Psoas muscle (tissue), 8 donors: ENCODE measurements at regions of chr4 and their contacts with region 1.

Region 1: DNA sequence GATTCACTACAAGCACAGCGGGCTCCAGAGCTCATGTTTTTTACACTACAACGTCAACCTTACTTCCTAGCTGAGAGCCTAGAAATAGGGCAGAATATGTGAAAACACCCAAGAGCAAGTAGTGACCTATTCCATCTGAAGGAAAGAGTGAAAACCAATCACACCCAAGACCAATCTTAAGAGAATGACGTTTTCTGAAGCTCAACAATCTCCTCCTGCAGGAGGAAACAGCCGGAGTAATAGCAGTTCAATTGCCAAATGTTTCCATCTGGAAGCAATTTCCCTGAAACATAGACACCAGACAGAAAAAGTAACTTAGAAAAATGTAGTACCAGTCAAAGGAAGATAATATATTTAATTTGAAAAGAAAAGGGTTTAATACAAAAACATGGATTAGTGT is 142.4 kb downstream of the ANXA5 start:
- DNase-seq: no peak
- ATAC-seq: peak in 1 of 4 donors; percentile 27
- H3K4me3 ChIP-seq: no peak overlapping the region
- H3K27ac ChIP-seq: peak overlapping the region; percentile 39
- H3K4me1 ChIP-seq: no peaks in the 10 kb centered on the region
- H3K27me3 ChIP-seq: no peaks in the 10 kb centered on the region
- CTCF ChIP-seq: no peak

Region 2: GRCh38 chr4:121484633-121485032 is 69.7 kb before region 1 on chr4:
- intact Hi-C with region 1: no loop called
- DNase-seq: no peak
- ATAC-seq: peak in 1 of 4 donors; percentile 31
- H3K4me3 ChIP-seq: no peak overlapping the region
- H3K27ac ChIP-seq: no peak overlapping the region
- H3K4me1 ChIP-seq: no peaks in the 10 kb centered on the region
- H3K27me3 ChIP-seq: no peaks in the 10 kb centered on the region
- CTCF ChIP-seq: peak; percentile 43

Region 3: GRCh38 chr4:121597346-121597934 is 43.1 kb after region 1 on chr4:
- intact Hi-C with region 1: loop called in 1 of 2 experiments (anchors 5 kb)
- DNase-seq: no peak
- ATAC-seq: no peak
- H3K4me3 ChIP-seq: no peak overlapping the region
- H3K27ac ChIP-seq: no peak overlapping the region
- H3K4me1 ChIP-seq: no peaks in the 10 kb centered on the region
- H3K27me3 ChIP-seq: no peaks in the 10 kb centered on the region
- CTCF ChIP-seq: no peak

Region 4: DNA sequence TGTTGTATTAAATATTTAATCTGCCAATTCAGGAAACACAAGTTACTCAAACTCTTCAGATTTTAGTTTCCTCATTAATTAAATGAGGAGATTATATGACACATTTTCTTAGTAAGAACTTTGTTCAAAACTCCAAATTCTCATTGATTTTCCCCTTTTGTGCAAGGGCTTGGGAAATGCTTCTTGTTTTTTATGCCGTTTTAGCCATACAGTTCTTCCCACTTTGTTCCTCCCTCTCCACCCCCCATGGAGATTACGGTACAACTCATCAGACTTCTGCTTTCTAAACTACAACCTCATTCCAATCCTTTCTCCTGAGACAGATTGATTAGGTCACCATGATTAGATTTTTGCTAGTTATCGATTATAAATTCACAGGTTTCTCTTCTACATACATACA is 326.8 kb after region 1 on chr4:
- intact Hi-C with region 1: no loop called
- DNase-seq: no peak
- ATAC-seq: no peak
- H3K4me3 ChIP-seq: no peak overlapping the region
- H3K27ac ChIP-seq: no peak overlapping the region
- H3K4me1 ChIP-seq: no peaks in the 10 kb centered on the region
- H3K27me3 ChIP-seq: peaks cover 0 to 3% (median 0%) of the 10 kb centered on the region in 3 donors
- CTCF ChIP-seq: no peak